CD8-positive, alpha-beta T cell (primary cell): ENCODE measurements at regions of chr5 and their contacts with region 1.

Region 1: DNA sequence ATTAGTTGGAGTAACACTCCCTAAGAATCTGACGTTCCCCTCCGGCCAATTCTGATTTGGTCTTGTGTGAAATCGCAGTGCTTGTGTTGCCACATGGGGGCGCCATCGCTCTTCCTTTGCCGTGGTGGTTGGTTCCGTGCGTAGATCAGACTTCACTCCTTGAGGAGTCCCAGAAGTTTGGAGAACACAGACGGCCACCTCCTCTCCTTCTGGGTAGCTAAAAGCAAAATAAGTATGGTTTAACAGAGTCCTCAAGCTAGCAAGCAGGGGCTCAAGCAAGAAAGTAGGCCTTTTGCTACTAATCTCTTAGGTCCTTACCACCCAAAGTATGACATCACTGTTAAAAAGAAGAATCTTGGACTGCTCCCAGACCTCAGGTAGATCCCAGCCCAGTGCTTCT is 59.5 kb downstream of the HSPA4 start:
- DNase-seq: peak; percentile 55 to 89 (median 79)
- ATAC-seq: peak; percentile 62
- H3K4me3 ChIP-seq: no peak overlapping the region
- H3K4me3 Mint-ChIP-seq: peak overlapping the region; percentile 29
- H3K27ac ChIP-seq: no peak overlapping the region
- H3K27ac Mint-ChIP-seq: no peak overlapping the region
- H3K4me1 ChIP-seq: peaks cover 16% of the 10 kb centered on the region
- H3K4me1 Mint-ChIP-seq: peaks cover 25% of the 10 kb centered on the region
- H3K27me3 ChIP-seq: no peaks in the 10 kb centered on the region
- H3K27me3 Mint-ChIP-seq: no peaks in the 10 kb centered on the region
- CTCF ChIP-seq: peak; percentile 84

Region 2: DNA sequence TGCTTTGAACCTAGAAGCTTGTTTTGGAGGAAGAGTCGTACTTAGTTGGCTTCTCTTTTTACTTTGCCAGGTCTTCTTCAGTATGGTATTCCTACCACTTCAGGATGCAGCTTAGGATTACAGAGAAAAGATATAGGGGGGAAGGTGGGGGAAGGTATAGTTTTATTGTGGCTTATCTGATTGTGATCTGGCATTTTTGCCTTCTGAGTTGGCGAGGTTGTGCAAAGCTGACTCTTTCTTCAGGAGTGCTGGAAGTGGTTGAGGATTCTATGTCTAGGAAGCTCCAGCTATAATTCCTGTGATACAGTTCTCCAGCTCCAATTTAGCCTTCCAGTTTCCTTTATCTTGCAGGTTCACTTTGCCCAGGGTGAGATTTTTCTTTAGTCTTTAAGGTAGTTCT is 1840.5 kb before region 1 on chr5:
- CTCF ChIA-PET with region 1: no interaction called
- POLR2A ChIA-PET with region 1: no interaction called
- intact Hi-C with region 1: no loop called
- DNase-seq: peak in 1 of 9 experiments; percentile 15
- ATAC-seq: no peak
- H3K4me3 ChIP-seq: peak overlapping the region; percentile 2 to 39
- H3K4me3 Mint-ChIP-seq: peak overlapping the region; percentile 82
- H3K27ac ChIP-seq: peak overlapping the region; percentile 32 to 93
- H3K27ac Mint-ChIP-seq: peak overlapping the region; percentile 93
- H3K4me1 ChIP-seq: peaks cover 68% of the 10 kb centered on the region
- H3K4me1 Mint-ChIP-seq: peaks cover 71% of the 10 kb centered on the region
- H3K27me3 ChIP-seq: no peaks in the 10 kb centered on the region
- H3K27me3 Mint-ChIP-seq: no peaks in the 10 kb centered on the region
- CTCF ChIP-seq: no peak

Region 3: GRCh38 chr5:132820162-132820754 is 291.0 kb before region 1 on chr5:
- CTCF ChIA-PET with region 1: no interaction called
- POLR2A ChIA-PET with region 1: no interaction called
- intact Hi-C with region 1: no loop called
- DNase-seq: peak; percentile 74 to 93 (median 87)
- ATAC-seq: peak; percentile 85
- H3K4me3 ChIP-seq: peak overlapping the region in 1 of 2 experiments; percentile 35
- H3K4me3 Mint-ChIP-seq: peak overlapping the region; percentile 40
- H3K27ac ChIP-seq: no peak overlapping the region
- H3K27ac Mint-ChIP-seq: no peak overlapping the region
- H3K4me1 ChIP-seq: peaks cover 16% of the 10 kb centered on the region
- H3K4me1 Mint-ChIP-seq: peaks cover 11% of the 10 kb centered on the region
- H3K27me3 ChIP-seq: peaks cover 10 to 14% of the 10 kb centered on the region in 2 experiments
- H3K27me3 Mint-ChIP-seq: peaks cover 36% of the 10 kb centered on the region
- CTCF ChIP-seq: peak; percentile 89

Region 4: DNA sequence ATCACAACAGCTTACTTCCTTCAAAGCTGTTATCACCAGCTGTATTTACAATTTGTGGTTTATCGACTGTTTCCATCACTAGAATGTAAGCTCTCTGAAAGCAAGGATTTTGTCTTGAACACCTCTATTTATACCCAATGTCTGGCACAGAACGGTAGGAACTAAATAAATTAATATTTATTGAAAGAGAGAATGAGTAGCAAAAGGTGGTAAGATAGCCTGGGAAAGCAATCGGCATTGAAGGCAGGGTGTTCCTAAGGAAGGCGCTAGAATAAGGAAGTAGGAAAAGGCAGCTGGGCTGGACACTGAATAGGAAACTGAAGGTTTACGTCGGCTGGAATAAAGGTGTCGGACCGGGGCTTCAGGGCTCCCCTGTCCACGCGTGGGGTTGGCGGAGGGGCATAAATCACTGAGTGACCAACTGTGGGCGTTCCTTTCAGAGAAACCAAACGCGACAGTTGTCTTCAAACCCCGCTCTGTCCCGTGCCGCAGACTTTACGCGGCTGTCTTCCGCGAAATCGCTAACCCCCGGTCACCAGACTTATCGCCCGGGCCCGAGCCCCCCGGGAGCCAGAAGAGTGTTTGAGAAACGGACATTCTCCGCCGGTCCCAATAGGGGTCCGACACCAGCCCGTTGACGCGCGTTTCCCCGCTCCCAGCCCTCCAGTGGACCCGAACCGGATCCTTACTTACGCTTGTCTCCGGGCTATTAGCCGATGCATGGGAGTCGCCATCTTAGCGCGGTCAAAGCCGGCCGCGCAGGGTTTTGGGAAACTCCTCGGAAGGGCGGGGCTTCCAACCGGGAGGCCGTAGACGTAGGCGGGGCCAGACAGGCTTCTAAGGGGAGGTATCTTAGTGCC is 85.3 kb before region 1 on chr5 and contains the start of gene ZCCHC10:
- CTCF ChIA-PET with region 1: no interaction called
- POLR2A ChIA-PET with region 1: no interaction called
- intact Hi-C with region 1: no loop called
- DNase-seq: peak; percentile 82 to 95 (median 92)
- ATAC-seq: peak; percentile 99
- H3K4me3 ChIP-seq: peak within 1 kb of the TSS; percentile 98 to 100
- H3K4me3 Mint-ChIP-seq: peak within 1 kb of the TSS; percentile 97
- H3K27ac ChIP-seq: peak within 1 kb of the TSS; percentile 86 to 95
- H3K27ac Mint-ChIP-seq: peak within 1 kb of the TSS; percentile 94
- H3K4me1 ChIP-seq: peaks cover 4% of the 10 kb centered on the region
- H3K4me1 Mint-ChIP-seq: peaks cover 25% of the 10 kb centered on the region
- H3K27me3 ChIP-seq: no peaks in the 10 kb centered on the region
- H3K27me3 Mint-ChIP-seq: no peaks in the 10 kb centered on the region
- CTCF ChIP-seq: no peak
- total RNA-seq, gene ZCCHC10: 22.3 to 22.7 TPM

Region 5: DNA sequence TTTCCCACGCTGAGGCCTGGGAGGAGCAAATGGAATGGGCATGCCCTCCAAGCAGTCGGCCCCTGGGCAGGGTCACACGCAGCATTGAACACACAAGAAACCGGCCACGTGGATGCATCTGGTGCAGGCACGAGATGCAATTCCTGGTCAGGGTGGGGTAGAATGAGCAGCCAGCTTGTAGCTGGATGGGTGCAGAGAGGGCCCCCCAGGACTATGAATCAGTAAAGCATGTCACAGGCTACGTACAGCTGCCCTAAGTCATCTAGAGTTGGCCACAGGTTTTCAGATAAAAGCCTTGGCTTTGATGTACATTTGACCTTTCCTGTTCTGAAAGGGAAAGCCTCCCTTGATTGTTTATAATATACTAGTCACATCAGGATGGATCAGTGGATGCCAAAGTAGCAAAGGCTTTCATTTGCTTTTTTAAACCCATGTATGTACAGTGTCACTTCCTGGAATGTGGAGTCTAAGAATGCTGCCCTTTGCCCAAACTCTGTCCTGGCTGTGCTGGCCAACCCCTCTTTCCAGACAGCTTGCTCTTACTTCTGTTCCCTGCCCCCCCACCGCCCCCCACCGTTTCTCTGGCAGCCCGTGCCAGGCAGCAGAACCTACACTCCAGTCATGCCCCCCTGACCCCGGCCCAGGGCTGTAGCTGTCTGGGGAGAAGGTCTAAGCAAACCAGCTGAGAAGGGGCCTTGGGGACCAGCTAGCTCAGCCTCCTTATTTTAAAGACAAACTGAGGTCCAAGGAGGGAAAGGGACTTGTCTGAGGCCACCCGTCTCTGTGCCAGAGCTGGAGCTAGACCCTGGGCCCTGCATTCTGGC is 109.8 kb after region 1 on chr5:
- CTCF ChIA-PET with region 1: interaction called, 41 read pairs
- POLR2A ChIA-PET with region 1: no interaction called
- intact Hi-C with region 1: loop called (anchors 1 to 2 kb)
- DNase-seq: peak in 1 of 9 experiments; percentile 23
- ATAC-seq: no peak
- H3K4me3 ChIP-seq: no peak overlapping the region
- H3K4me3 Mint-ChIP-seq: no peak overlapping the region
- H3K27ac ChIP-seq: no peak overlapping the region
- H3K27ac Mint-ChIP-seq: no peak overlapping the region
- H3K4me1 ChIP-seq: no peaks in the 10 kb centered on the region
- H3K4me1 Mint-ChIP-seq: no peaks in the 10 kb centered on the region
- H3K27me3 ChIP-seq: no peaks in the 10 kb centered on the region
- H3K27me3 Mint-ChIP-seq: no peaks in the 10 kb centered on the region
- CTCF ChIP-seq: no peak

Region 6: DNA sequence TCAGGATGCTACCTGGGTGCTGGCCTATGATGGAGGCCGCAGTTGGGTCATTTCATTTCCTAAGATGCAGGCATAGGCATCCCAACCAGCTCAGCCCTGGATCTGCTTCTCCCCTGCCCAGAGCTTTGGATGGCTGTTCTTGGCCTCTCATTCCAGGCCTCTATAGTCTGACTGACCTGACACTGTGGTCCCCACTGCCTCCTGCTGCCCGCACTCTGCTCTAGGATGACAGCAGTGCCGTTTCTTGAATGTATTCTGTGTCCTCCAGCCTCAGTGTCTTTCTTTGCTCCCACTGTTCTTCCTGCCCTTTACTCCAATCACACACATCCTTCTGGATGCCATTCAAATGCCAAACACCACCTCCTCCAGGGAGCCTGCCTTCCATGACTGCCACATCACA is 176.2 kb after region 1 on chr5:
- CTCF ChIA-PET with region 1: interaction called, 97 read pairs
- POLR2A ChIA-PET with region 1: no interaction called
- intact Hi-C with region 1: loop called in 1 of 2 experiments (anchors 1 kb)
- DNase-seq: peak; percentile 5 to 70 (median 45)
- ATAC-seq: no peak
- H3K4me3 ChIP-seq: no peak overlapping the region
- H3K4me3 Mint-ChIP-seq: no peak overlapping the region
- H3K27ac ChIP-seq: no peak overlapping the region
- H3K27ac Mint-ChIP-seq: no peak overlapping the region
- H3K4me1 ChIP-seq: no peaks in the 10 kb centered on the region
- H3K4me1 Mint-ChIP-seq: no peaks in the 10 kb centered on the region
- H3K27me3 ChIP-seq: no peaks in the 10 kb centered on the region
- H3K27me3 Mint-ChIP-seq: no peaks in the 10 kb centered on the region
- CTCF ChIP-seq: peak; percentile 25

Region 7: GRCh38 chr5:133460172-133460758 is 349.0 kb after region 1 on chr5:
- CTCF ChIA-PET with region 1: no interaction called
- POLR2A ChIA-PET with region 1: no interaction called
- intact Hi-C with region 1: loop called (anchors 1 to 2 kb)
- DNase-seq: peak in 3 of 9 experiments; percentile 21 to 32 (median 29)
- ATAC-seq: no peak
- H3K4me3 ChIP-seq: no peak overlapping the region
- H3K4me3 Mint-ChIP-seq: no peak overlapping the region
- H3K27ac ChIP-seq: no peak overlapping the region
- H3K27ac Mint-ChIP-seq: no peak overlapping the region
- H3K4me1 ChIP-seq: no peaks in the 10 kb centered on the region
- H3K4me1 Mint-ChIP-seq: no peaks in the 10 kb centered on the region
- H3K27me3 ChIP-seq: no peaks in the 10 kb centered on the region
- H3K27me3 Mint-ChIP-seq: no peaks in the 10 kb centered on the region
- CTCF ChIP-seq: no peak